T-cell (primary cell): ENCODE measurements at regions of chr20 and their contacts with region 1.

Region 1: DNA sequence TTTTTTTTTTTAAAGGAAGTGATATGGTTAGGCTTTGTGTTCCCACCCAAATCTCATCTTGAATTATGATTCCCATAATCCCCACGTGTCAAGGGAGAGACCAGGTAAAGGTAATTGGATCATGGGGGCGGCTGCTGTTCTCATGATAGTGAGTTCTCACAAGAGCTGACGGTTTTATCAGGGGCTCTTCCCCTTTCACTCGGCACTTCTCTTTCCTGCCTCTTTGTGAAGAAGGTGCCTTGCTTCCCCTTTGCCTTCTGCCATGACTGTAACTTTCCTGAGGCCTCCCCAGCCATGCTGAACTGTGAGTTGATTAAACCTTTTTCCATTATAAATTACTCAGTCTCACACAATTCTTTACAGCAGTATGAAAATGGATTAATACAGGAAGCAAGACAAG is 64.3 kb downstream of the ZFP64 start:
- DNase-seq: no peak
- ATAC-seq: no peak
- H3K4me3 ChIP-seq: no peak overlapping the region
- H3K4me3 Mint-ChIP-seq: no peak overlapping the region
- H3K27ac ChIP-seq: no peak overlapping the region
- H3K27ac Mint-ChIP-seq: no peak overlapping the region
- H3K4me1 ChIP-seq: no peaks in the 10 kb centered on the region
- H3K4me1 Mint-ChIP-seq: no peaks in the 10 kb centered on the region
- H3K27me3 ChIP-seq: no peaks in the 10 kb centered on the region
- H3K27me3 Mint-ChIP-seq: no peaks in the 10 kb centered on the region

Region 2: GRCh38 chr20:52150440-52151258 is 23.3 kb after region 1 on chr20:
- CTCF ChIA-PET with region 1: interaction called in 1 of 2 experiments, 19 read pairs
- POLR2A ChIA-PET with region 1: interaction called in 1 of 2 experiments, 3 read pairs
- DNase-seq: peak in 7 of 35 experiments; percentile 3 to 58 (median 12)
- ATAC-seq: peak in 2 of 4 experiments; percentile 45 to 60
- H3K4me3 ChIP-seq: no peak overlapping the region
- H3K4me3 Mint-ChIP-seq: no peak overlapping the region
- H3K27ac ChIP-seq: no peak overlapping the region
- H3K27ac Mint-ChIP-seq: peak overlapping the region in 1 of 2 donors; percentile 0
- H3K4me1 ChIP-seq: no peaks in the 10 kb centered on the region
- H3K4me1 Mint-ChIP-seq: no peaks in the 10 kb centered on the region
- H3K27me3 ChIP-seq: no peaks in the 10 kb centered on the region
- H3K27me3 Mint-ChIP-seq: no peaks in the 10 kb centered on the region

Region 3: GRCh38 chr20:53547664-53548239 is 1420.4 kb after region 1 on chr20:
- CTCF ChIA-PET with region 1: interaction called, 4 to 13 read pairs
- POLR2A ChIA-PET with region 1: interaction called in 1 of 2 experiments, 3 read pairs
- DNase-seq: peak in 24 of 35 experiments; percentile 1 to 61 (median 18)
- ATAC-seq: peak in 2 of 4 experiments; percentile 52 to 53
- H3K4me3 ChIP-seq: no peak overlapping the region
- H3K4me3 Mint-ChIP-seq: no peak overlapping the region
- H3K27ac ChIP-seq: no peak overlapping the region
- H3K27ac Mint-ChIP-seq: no peak overlapping the region
- H3K4me1 ChIP-seq: no peaks in the 10 kb centered on the region
- H3K4me1 Mint-ChIP-seq: peaks cover 0 to 5% (median 5%) of the 10 kb centered on the region in 3 donors
- H3K27me3 ChIP-seq: no peaks in the 10 kb centered on the region
- H3K27me3 Mint-ChIP-seq: no peaks in the 10 kb centered on the region